ENCODE measurements at regions of chr17 and their contacts with region 1.

Region 1: DNA sequence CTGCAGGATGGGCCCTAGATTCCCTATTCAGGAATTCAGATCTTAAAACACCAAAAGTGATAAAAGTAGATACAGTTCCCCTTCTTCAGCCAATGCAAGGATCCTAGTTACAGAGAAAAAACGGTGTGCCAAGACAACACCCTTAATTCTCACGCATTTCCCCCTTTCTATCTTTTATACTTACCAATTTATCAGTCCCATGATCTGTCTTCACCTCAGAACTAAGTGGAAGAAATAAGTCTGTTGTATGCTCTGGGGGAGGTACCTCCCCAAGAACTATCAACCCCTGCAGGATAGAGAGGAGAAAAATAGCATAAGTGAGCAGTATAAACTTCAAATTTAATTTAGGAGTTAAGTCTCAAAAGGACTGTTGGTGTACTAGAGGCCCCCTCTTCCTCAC is 83.2 kb downstream of the STH start:
- DNase-seq: no peak
- H3K4me3 ChIP-seq: no peak overlapping the region
- H3K27ac ChIP-seq: no peak overlapping the region
- H3K4me1 ChIP-seq: peaks cover 3 to 31% (median 11%) of the 10 kb centered on the region in 4 donors
- H3K27me3 ChIP-seq: no peaks in the 10 kb centered on the region
- CTCF ChIP-seq: no peak
- EP300 ChIP-seq: no peak
- POLR2A ChIP-seq: no peak

Region 2: GRCh38 chr17:45040459-45040858 is 1041.8 kb before region 1 on chr17:
- in situ Hi-C with region 1: no loop called
- intact Hi-C with region 1: loop called (anchors 5 kb)
- DNase-seq: no peak
- H3K4me3 ChIP-seq: no peak overlapping the region
- H3K27ac ChIP-seq: no peak overlapping the region
- H3K4me1 ChIP-seq: peaks cover 19 to 72% (median 27%) of the 10 kb centered on the region in 4 donors
- H3K27me3 ChIP-seq: no peaks in the 10 kb centered on the region
- CTCF ChIP-seq: no peak
- EP300 ChIP-seq: no peak
- POLR2A ChIP-seq: no peak

Region 3: GRCh38 chr17:46061435-46061834 is 20.8 kb before region 1 on chr17:
- in situ Hi-C with region 1: no loop called
- intact Hi-C with region 1: no loop called
- DNase-seq: no peak
- H3K4me3 ChIP-seq: no peak overlapping the region
- H3K27ac ChIP-seq: no peak overlapping the region
- H3K4me1 ChIP-seq: peaks cover 0 to 9% (median 0%) of the 10 kb centered on the region in 4 donors
- H3K27me3 ChIP-seq: no peaks in the 10 kb centered on the region
- CTCF ChIP-seq: peak; percentile 30 to 49 (median 37)
- EP300 ChIP-seq: no peak
- POLR2A ChIP-seq: no peak